H1 (cell line): ENCODE measurements at regions of chr5 and their contacts with region 1.

Region 1: GRCh38 chr5:110401881-110402280 is 324.6 kb downstream of the TMEM232 start:
- DNase-seq: no peak
- H3K4me3 ChIP-seq: no peak overlapping the region
- H3K27ac ChIP-seq: no peak overlapping the region
- H3K4me1 ChIP-seq: no peaks in the 10 kb centered on the region
- H3K27me3 ChIP-seq: no peaks in the 10 kb centered on the region
- CTCF ChIP-seq: no peak
- EP300 ChIP-seq: no peak
- POLR2A ChIP-seq: no peak
- RAD21 ChIP-seq: no peak

Region 2: DNA sequence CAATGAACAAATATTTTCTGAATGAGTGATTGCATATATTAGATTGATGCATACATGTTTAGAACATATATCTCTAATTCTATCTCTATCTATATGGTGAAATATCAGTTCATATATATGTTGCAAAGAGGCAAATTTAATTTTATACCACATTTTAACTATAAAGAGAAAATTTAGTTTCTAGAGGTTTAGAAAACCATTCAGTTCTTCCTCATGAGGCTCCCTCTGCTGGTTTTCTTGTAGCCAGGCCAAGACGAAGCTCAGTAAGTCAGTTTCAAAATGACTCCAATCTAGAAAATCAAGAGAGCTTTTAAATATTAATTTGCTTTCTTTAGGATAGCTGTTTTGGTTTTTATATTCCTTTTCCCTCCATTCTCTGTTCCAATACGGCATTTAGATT is 12.5 kb after region 1 on chr5:
- CTCF ChIA-PET with region 1: interaction called, 22 read pairs
- POLR2A ChIA-PET with region 1: interaction called, 3 read pairs
- DNase-seq: no peak
- H3K4me3 ChIP-seq: no peak overlapping the region
- H3K27ac ChIP-seq: no peak overlapping the region
- H3K4me1 ChIP-seq: no peaks in the 10 kb centered on the region; a peak in 1 of 7 replicates
- H3K27me3 ChIP-seq: no peaks in the 10 kb centered on the region
- CTCF ChIP-seq: peak in 2 of 3 experiments; percentile 23 to 28; a peak in 2 of 4 replicates
- EP300 ChIP-seq: no peak
- POLR2A ChIP-seq: no peak
- RAD21 ChIP-seq: peak; percentile 19 to 47; a peak in 3 of 4 replicates

Region 3: DNA sequence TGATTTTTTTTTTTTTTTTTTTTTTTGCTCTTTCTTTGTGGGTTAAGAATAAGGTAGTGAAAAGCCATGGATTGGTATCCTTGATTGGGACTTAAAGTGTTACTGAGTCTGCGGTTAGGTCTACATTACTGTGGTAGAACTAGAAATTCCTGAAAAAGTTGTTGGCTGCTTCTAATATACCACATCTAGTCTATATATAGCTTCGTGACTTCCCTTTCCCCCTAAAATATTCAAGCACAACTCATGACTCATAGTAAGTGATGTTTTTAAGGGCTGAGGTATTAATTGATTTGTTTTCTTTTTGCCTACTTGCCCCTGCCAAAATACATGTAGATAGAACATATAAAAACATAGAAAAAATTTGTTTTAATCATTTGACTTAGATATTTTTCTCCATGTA is 77.0 kb after region 1 on chr5:
- CTCF ChIA-PET with region 1: no interaction called
- POLR2A ChIA-PET with region 1: no interaction called
- DNase-seq: no peak
- H3K4me3 ChIP-seq: no peak overlapping the region
- H3K27ac ChIP-seq: no peak overlapping the region
- H3K4me1 ChIP-seq: peaks cover 0 to 5% (median 1%) of the 10 kb centered on the region in 4 experiments; a peak in 2 of 7 replicates
- H3K27me3 ChIP-seq: no peaks in the 10 kb centered on the region
- CTCF ChIP-seq: no peak
- EP300 ChIP-seq: no peak
- POLR2A ChIP-seq: no peak
- RAD21 ChIP-seq: no peak

Region 4: DNA sequence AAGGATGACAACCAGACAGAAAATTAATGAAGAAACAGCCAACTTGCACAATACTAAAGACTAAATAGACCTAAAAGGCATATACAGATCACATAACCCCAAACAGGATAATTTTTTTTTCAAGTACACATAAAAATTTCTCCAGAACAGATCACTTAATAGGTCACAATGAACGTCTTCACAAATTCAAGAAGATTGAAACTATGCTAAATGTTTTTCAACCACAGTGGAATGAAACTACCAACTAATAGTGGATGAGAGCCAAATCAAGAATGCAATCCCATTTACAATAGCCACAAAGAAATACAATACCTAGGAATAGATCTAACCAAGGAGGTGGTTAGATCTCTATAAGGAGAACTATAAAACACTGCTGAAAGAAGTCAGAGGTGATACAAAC is 178.7 kb after region 1 on chr5:
- CTCF ChIA-PET with region 1: no interaction called
- POLR2A ChIA-PET with region 1: no interaction called
- DNase-seq: no peak
- H3K4me3 ChIP-seq: no peak overlapping the region
- H3K27ac ChIP-seq: no peak overlapping the region
- H3K4me1 ChIP-seq: no peaks in the 10 kb centered on the region
- H3K27me3 ChIP-seq: no peaks in the 10 kb centered on the region
- CTCF ChIP-seq: no peak
- EP300 ChIP-seq: no peak
- POLR2A ChIP-seq: no peak
- RAD21 ChIP-seq: no peak